ENCODE measurements at regions of chr21 and their contacts with region 1.

Region 1: DNA sequence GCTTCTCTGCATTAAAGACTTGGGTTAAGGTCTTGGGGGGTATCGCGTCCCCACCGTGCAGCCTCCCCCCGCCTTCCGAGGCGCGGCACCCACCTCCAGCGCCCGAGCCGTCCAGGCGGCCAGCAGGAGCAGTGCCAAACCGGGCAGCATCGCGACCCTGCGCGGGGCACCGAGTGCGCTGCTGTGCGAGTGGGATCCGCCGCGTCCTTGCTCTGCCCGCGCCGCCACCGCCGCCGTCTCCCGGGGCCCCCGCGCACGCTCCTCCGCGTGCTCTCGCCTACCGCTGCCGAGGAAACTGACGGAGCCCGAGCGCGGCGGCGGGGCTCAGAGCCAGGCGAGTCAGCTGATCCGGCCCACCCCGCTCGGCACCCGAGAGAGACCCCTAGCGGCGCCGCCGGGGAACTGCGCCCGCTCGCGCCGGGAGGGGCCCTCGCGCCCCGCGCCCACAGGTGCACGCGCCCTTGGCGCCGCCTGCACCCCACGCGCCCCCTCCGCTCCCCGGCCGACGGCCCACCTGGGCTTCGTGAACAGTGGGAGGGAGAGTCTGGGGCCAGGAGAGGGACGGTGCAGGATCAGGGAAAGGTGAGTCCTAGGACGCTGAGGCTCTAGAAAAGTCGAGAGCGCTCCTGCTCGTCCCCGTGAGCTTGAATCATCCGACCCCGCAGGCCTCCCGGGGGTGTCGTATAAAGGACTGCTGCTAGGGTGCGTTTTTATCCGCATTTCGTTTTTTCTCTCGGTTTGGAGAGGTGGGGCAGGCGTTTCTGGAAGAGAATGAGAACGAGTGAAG is at the start of gene APP:
- DNase-seq: peak; percentile 84 to 87
- H3K4me3 ChIP-seq: peak within 1 kb of the TSS; percentile 84 to 99 (median 85)
- H3K27ac ChIP-seq: peak within 1 kb of the TSS; percentile 66 to 95 (median 92)
- H3K4me1 ChIP-seq: peaks cover 25 to 29% of the 10 kb centered on the region in 2 donors
- H3K27me3 ChIP-seq: no peaks in the 10 kb centered on the region
- CTCF ChIP-seq: peak in 5 of 6 experiments; percentile 76 to 100 (median 99)
- POLR2A ChIP-seq: peak; percentile 56 to 94
- total RNA-seq, gene APP: 513 to 716 (median 676) TPM

Region 2: DNA sequence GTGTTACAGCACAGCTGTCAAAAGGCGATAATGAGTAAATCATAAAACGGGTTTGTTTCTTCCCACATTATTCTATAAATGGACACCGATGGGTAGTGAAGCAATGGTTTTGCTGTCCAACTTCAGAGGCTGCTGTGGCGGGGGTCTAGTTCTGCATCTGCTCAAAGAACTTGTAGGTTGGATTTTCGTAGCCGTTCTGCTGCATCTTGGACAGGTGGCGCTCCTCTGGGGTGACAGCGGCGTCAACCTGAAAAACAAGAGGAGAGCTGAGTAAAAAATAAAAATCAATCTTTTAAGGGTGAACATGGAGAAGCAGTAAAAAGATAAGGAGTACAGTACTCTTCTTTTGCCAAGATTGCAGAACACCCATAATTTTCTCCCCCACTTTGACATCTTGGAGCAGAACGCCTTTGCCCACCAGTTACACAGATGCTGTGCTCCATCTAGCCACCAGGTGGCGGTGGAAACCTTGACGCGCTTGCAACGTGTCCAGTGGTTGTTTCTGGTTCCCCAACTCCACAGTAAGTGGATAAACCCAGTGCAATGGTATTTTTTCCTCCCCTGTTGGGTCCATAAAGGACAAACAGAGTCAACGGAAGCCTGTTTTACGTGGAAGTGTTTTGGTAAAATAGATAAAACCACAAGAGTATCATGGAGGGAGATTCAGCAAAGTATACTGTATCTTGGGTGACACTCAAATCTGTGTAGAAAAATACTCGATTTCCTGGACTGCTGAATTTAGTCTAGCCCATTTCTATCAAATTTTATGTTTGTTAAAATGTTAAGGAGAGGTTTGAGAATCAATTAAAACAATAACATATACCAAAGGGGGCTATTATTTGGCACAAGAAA is 288.9 kb before region 1 on chr21:
- intact Hi-C with region 1: loop called (anchors 2 kb)
- DNase-seq: peak; percentile 56 to 65
- H3K4me3 ChIP-seq: no peak overlapping the region
- H3K27ac ChIP-seq: no peak overlapping the region
- H3K4me1 ChIP-seq: peaks cover 0 to 5% of the 10 kb centered on the region in 2 donors
- H3K27me3 ChIP-seq: no peaks in the 10 kb centered on the region
- CTCF ChIP-seq: peak; percentile 80 to 94 (median 83)
- POLR2A ChIP-seq: no peak

Region 3: DNA sequence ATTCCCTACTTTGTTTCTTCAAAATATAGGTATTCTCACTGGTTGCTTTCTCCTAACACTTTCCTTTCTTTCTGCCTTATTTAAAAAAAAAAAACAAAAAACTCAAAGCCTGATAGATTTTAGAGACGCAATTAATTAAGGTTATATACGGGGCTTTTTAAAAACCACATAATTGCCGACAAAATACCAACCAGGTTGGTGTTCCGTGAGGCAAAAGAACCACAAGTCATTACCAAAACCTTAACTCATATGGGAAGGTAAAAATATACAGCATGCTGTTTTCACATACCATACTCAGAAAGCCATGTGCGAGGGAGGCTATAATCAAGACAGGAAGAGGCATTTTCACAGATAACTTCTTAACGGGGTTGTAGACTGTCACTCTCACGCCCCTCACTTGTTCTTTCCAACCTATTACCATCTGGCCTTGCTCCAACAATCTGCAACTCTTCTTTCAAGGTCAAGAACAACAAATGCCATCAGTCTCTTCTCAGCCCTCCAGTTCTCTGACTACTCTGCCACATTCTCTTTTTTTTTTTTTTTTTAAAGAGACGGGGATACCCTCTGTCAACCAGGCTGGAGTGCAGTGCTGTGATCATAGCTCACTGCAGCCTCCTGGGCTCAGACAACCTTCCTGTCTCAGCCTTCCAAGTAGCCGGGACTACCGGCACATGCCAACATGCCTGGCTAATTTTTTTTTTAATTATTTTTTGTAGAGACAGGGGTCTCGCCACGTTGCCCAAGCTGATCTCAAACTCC is 102.6 kb before region 1 on chr21:
- intact Hi-C with region 1: loop called (anchors 10 kb)
- DNase-seq: peak; percentile 17
- H3K4me3 ChIP-seq: no peak overlapping the region
- H3K27ac ChIP-seq: no peak overlapping the region
- H3K4me1 ChIP-seq: peaks cover 38 to 45% of the 10 kb centered on the region in 2 donors
- H3K27me3 ChIP-seq: no peaks in the 10 kb centered on the region
- CTCF ChIP-seq: no peak
- POLR2A ChIP-seq: no peak